Calu3 (cell line): ENCODE measurements at regions of chr12 and their contacts with region 1.

Region 1: GRCh38 chr12:62522984-62523383 is 56.4 kb downstream of the MON2 start:
- DNase-seq: no peak
- H3K4me3 Mint-ChIP-seq: no peak overlapping the region
- H3K27ac Mint-ChIP-seq: no peak overlapping the region
- H3K4me1 Mint-ChIP-seq: peaks cover 17% of the 10 kb centered on the region
- H3K27me3 Mint-ChIP-seq: no peaks in the 10 kb centered on the region
- CTCF ChIP-seq: no peak

Region 2: DNA sequence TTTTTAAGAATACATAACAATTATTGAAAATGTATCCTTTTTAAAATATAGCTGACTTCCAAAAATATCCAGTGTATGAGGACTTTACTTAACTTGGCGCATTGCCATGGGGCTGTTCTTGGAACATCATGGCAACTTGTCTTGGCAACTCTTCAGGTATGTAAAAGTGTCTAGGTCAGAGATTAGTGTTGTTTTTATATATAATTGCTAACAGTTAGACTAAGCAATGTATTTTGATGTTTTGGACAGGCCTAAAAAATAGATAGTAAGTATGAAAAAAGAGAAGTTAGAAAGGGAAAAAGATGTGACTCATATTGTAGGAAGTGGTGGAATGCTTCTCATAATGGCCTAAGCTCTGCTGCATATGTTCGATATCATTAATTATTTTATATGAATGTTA is 14.6 kb after region 1 on chr12:
- CTCF ChIA-PET with region 1: no interaction called
- intact Hi-C with region 1: loop called (anchors 2 kb)
- DNase-seq: peak; percentile 34
- H3K4me3 Mint-ChIP-seq: no peak overlapping the region
- H3K27ac Mint-ChIP-seq: peak overlapping the region; percentile 3
- H3K4me1 Mint-ChIP-seq: peaks cover 16% of the 10 kb centered on the region
- H3K27me3 Mint-ChIP-seq: no peaks in the 10 kb centered on the region
- CTCF ChIP-seq: no peak

Region 3: DNA sequence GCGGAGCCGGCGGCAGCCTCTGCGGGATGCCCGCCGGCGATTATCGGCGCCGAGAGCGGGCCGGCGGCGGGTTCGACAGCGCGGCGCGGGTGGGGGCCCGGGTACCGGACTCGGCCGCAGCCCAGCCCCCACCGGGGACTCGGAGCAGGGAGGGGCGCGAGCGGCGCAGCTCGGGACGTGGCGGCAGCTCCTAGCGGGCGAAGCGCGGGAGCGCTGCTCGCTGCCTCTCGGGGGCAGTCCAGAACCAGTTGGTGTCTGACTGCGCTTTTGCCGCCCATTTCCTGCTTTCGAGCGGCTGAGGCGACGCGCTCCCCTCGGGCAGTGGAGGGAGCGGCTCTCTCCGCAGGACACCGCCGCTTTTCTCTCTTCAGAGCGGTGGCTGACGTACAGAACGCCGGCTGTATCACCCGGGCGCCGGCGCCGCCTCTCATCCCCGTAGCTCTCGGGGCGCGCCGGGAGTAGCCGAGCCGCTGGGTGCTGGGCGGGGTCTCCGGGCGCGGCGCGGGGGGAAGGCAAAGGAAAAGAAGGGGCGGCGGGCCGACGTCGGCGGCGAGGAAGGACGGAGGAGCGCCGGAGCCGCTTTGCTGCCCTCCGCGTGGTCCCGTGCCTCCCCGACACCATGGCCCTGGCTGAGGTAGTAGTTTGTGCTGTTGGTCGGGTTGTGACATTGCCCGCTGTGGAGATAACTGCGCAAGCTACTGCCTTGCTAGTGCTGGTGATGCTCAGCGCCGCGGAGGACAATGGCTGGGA is 80.3 kb after region 1 on chr12:
- CTCF ChIA-PET with region 1: no interaction called
- intact Hi-C with region 1: no loop called
- DNase-seq: peak; percentile 92
- H3K4me3 Mint-ChIP-seq: peak overlapping the region; percentile 88
- H3K27ac Mint-ChIP-seq: peak overlapping the region; percentile 99
- H3K4me1 Mint-ChIP-seq: peaks cover 18% of the 10 kb centered on the region
- H3K27me3 Mint-ChIP-seq: no peaks in the 10 kb centered on the region
- CTCF ChIP-seq: peak; percentile 47